Naive thymus-derived CD4-positive, alpha-beta T cell (primary cell): ENCODE measurements at regions of chr3 and their contacts with region 1.

Region 1: GRCh38 chr3:16290007-16290826 is 25.2 kb downstream of the OXNAD1 start:
- DNase-seq: peak in 6 of 9 donors; percentile 44 to 67 (median 62)
- ATAC-seq: peak; percentile 58
- H3K4me3 ChIP-seq: peak overlapping the region; percentile 67
- H3K4me3 Mint-ChIP-seq: peak overlapping the region; percentile 87 to 99 (median 96)
- H3K27ac ChIP-seq: peak overlapping the region; percentile 90
- H3K27ac Mint-ChIP-seq: peak overlapping the region; percentile 86 to 99 (median 97)
- H3K4me1 ChIP-seq: peaks cover 32 to 65% of the 10 kb centered on the region in 2 donors
- H3K4me1 Mint-ChIP-seq: peaks cover 38 to 77% (median 53%) of the 10 kb centered on the region in 7 donors
- H3K27me3 ChIP-seq: no peaks in the 10 kb centered on the region
- H3K27me3 Mint-ChIP-seq: no peaks in the 10 kb centered on the region

Region 2: GRCh38 chr3:15527031-15527459 is 763.2 kb before region 1 on chr3:
- CTCF ChIA-PET with region 1: no interaction called
- POLR2A ChIA-PET with region 1: no interaction called
- intact Hi-C with region 1: no loop called
- DNase-seq: no peak
- ATAC-seq: no peak
- H3K4me3 ChIP-seq: no peak overlapping the region
- H3K4me3 Mint-ChIP-seq: no peak overlapping the region
- H3K27ac ChIP-seq: no peak overlapping the region
- H3K27ac Mint-ChIP-seq: no peak overlapping the region
- H3K4me1 ChIP-seq: peaks cover 9 to 30% of the 10 kb centered on the region in 2 donors
- H3K4me1 Mint-ChIP-seq: peaks cover 9 to 31% (median 19%) of the 10 kb centered on the region in 7 donors
- H3K27me3 ChIP-seq: no peaks in the 10 kb centered on the region
- H3K27me3 Mint-ChIP-seq: peaks cover 0 to 5% (median 0%) of the 10 kb centered on the region in 5 donors

Region 3: GRCh38 chr3:16270855-16271254 is 19.4 kb before region 1 on chr3:
- CTCF ChIA-PET with region 1: interaction called, 92 read pairs
- POLR2A ChIA-PET with region 1: interaction called, 36 read pairs
- intact Hi-C with region 1: loop called in 1 of 2 experiments (anchors 1 kb)
- DNase-seq: no peak
- ATAC-seq: no peak
- H3K4me3 ChIP-seq: no peak overlapping the region
- H3K4me3 Mint-ChIP-seq: no peak overlapping the region
- H3K27ac ChIP-seq: no peak overlapping the region
- H3K27ac Mint-ChIP-seq: no peak overlapping the region
- H3K4me1 ChIP-seq: peaks cover 7 to 17% of the 10 kb centered on the region in 2 donors
- H3K4me1 Mint-ChIP-seq: peaks cover 5 to 31% (median 26%) of the 10 kb centered on the region in 7 donors
- H3K27me3 ChIP-seq: no peaks in the 10 kb centered on the region
- H3K27me3 Mint-ChIP-seq: no peaks in the 10 kb centered on the region

Region 4: DNA sequence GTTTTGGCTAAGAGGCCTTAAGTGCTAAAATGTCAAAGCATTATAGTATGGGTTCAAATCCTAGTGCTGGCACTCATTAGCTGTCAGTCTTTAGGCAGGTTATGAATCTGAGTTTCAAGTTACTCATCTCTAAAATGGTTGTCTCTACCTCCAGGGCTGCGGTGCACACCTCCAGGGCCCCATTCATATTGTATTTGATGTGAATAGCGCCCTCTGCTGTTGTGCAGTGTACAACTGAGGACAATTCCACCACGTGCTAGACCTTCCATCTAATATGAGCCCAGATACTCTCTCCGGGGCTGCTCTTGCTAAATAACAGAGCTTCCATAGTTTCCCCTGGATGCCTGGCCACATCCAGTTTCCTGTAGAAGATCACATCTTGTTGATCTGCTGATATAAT is 29.1 kb after region 1 on chr3:
- CTCF ChIA-PET with region 1: interaction called, 238 read pairs
- POLR2A ChIA-PET with region 1: interaction called, 318 read pairs
- intact Hi-C with region 1: loop called (anchors 1 kb)
- DNase-seq: peak in 8 of 9 donors; percentile 66 to 81 (median 78)
- ATAC-seq: peak; percentile 93
- H3K4me3 ChIP-seq: no peak overlapping the region
- H3K4me3 Mint-ChIP-seq: peak overlapping the region; percentile 35 to 78 (median 60)
- H3K27ac ChIP-seq: peak overlapping the region; percentile 60
- H3K27ac Mint-ChIP-seq: peak overlapping the region; percentile 79 to 98 (median 91)
- H3K4me1 ChIP-seq: peaks cover 40 to 58% of the 10 kb centered on the region in 2 donors
- H3K4me1 Mint-ChIP-seq: peaks cover 44 to 89% (median 81%) of the 10 kb centered on the region in 7 donors
- H3K27me3 ChIP-seq: no peaks in the 10 kb centered on the region
- H3K27me3 Mint-ChIP-seq: no peaks in the 10 kb centered on the region

Region 5: DNA sequence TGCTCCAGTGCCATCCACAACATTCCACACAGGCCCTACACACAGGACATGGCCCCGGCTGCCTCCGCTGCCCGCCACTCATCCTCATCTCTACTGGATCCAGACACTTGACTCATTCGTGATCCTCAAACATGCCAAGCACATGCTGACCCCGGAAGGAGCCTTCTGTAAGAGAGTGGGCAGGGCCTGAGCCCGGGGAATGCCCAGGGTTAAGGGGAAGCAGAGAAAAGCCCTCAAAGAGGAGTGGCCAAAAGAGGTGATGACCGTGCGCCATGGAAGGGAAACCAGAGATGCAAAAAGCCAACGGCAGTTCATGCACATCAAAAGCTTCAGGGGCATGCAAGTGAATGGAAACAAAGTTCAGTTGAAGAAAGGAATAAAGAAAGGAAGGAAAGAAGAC is 177.2 kb after region 1 on chr3:
- CTCF ChIA-PET with region 1: interaction called, 4 read pairs
- POLR2A ChIA-PET with region 1: interaction called, 5 read pairs
- intact Hi-C with region 1: loop called in 1 of 2 experiments (anchors 5 kb)
- DNase-seq: peak in 8 of 9 donors; percentile 14 to 77 (median 39)
- ATAC-seq: peak; percentile 80
- H3K4me3 ChIP-seq: no peak overlapping the region
- H3K4me3 Mint-ChIP-seq: peak overlapping the region; percentile 68 to 86 (median 79)
- H3K27ac ChIP-seq: peak overlapping the region; percentile 68
- H3K27ac Mint-ChIP-seq: peak overlapping the region; percentile 49 to 99 (median 95)
- H3K4me1 ChIP-seq: peaks cover 6 to 44% of the 10 kb centered on the region in 2 donors
- H3K4me1 Mint-ChIP-seq: peaks cover 55 to 84% (median 67%) of the 10 kb centered on the region in 7 donors
- H3K27me3 ChIP-seq: no peaks in the 10 kb centered on the region
- H3K27me3 Mint-ChIP-seq: no peaks in the 10 kb centered on the region

Region 6: DNA sequence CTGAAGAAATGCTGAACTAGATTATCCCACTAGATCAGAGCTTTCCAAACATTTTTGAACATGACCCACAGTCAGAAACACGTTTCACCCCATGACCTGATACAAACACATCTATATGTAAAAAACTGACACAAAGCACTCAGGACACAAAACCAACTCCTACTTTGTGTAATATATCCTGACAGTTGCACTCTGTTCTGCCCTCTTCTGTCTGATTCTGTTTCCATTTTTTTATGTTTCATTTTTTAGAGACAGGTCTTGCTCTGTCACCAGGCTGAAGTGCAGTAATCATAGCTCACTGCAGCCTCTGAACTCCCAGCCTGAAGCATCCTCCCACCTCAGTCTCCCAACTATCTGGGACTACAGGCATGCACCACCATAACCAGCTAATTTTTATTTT is 239.0 kb after region 1 on chr3:
- CTCF ChIA-PET with region 1: interaction called, 32 read pairs
- POLR2A ChIA-PET with region 1: interaction called, 9 read pairs
- intact Hi-C with region 1: loop called in 1 of 2 experiments (anchors 1 kb)
- DNase-seq: peak in 5 of 9 donors; percentile 32 to 54 (median 39)
- ATAC-seq: peak; percentile 62
- H3K4me3 ChIP-seq: no peak overlapping the region
- H3K4me3 Mint-ChIP-seq: no peak overlapping the region
- H3K27ac ChIP-seq: no peak overlapping the region
- H3K27ac Mint-ChIP-seq: peak overlapping the region in 6 of 9 donors; percentile 26 to 72 (median 58)
- H3K4me1 ChIP-seq: no peaks in the 10 kb centered on the region
- H3K4me1 Mint-ChIP-seq: peaks cover 4 to 19% (median 12%) of the 10 kb centered on the region in 7 donors
- H3K27me3 ChIP-seq: no peaks in the 10 kb centered on the region
- H3K27me3 Mint-ChIP-seq: peaks cover 0 to 19% (median 0%) of the 10 kb centered on the region in 5 donors